CD8-positive, alpha-beta T cell (primary cell): ENCODE measurements at regions of chr12 and their contacts with region 1.

Region 1: DNA sequence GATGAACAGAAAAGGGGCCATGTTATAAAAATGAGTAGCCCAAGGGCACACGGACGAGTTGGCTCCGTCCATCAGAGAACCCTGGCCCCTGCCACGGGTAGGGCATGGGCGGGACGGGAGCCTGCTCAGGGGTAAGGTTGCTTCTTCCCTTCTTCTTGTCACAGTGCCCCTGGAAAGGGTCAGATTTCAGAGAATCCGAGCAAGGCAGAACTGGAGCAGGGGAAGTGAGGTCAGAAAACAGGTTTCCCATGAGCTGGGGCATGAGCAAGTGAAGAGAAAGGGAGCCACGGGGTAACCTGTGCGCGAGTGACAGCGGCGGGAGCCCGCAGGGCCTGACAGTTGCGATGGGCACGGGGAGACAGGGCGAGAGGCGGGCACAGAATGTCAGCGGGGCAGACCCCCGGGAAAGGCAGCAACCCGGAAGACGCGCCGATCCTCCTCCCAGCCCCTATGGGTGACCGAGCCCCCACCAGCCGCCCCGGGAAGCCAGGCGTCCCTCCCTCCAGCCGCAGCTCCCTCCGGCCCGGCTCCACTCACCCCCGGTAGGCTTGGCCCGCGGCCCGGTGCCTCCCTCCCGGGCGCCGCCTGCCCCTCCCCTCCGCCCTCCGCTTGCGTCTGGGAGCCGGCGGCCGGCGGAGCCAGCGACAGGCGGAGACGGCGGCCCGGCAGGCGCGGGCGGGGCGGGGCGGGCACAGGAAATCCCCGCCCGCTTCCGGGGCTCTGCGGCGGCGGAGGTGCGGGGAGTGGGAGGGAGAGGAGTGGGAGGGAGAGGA is at the start of gene ZNF641:
- DNase-seq: peak; percentile 54 to 93 (median 81)
- ATAC-seq: peak; percentile 87
- H3K4me3 ChIP-seq: peak within 1 kb of the TSS; percentile 86 to 88
- H3K4me3 Mint-ChIP-seq: peak within 1 kb of the TSS; percentile 92
- H3K27ac ChIP-seq: peak within 1 kb of the TSS; percentile 71 to 88
- H3K27ac Mint-ChIP-seq: peak within 1 kb of the TSS; percentile 95
- H3K4me1 ChIP-seq: peaks cover 26% of the 10 kb centered on the region
- H3K4me1 Mint-ChIP-seq: peaks cover 44% of the 10 kb centered on the region
- H3K27me3 ChIP-seq: no peaks in the 10 kb centered on the region
- H3K27me3 Mint-ChIP-seq: no peaks in the 10 kb centered on the region
- CTCF ChIP-seq: no peak
- total RNA-seq, gene ZNF641: 12.1 to 12.3 TPM

Region 2: DNA sequence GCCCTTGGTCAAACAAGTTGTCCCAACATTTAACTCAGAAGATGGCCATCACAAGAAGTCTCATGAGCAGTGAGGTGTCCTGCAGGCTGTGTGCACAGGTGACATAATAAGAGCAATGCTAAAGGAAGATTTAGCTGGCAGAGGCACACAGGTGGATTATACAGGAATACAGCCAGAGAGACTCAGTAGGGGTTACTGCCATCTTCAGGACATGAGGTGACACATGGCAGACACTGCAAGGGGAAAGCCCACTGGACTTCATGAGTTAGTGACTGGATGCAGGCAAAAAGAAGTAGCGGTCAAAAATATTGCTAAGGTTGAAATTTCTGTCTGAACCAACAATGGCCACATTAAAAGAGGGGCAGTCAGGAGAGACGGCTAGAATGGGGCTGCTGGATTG is 692.9 kb before region 1 on chr12:
- CTCF ChIA-PET with region 1: no interaction called
- POLR2A ChIA-PET with region 1: no interaction called
- intact Hi-C with region 1: loop called in 1 of 2 experiments (anchors 5 kb)
- DNase-seq: no peak
- ATAC-seq: no peak
- H3K4me3 ChIP-seq: no peak overlapping the region
- H3K4me3 Mint-ChIP-seq: no peak overlapping the region
- H3K27ac ChIP-seq: no peak overlapping the region
- H3K27ac Mint-ChIP-seq: no peak overlapping the region
- H3K4me1 ChIP-seq: no peaks in the 10 kb centered on the region
- H3K4me1 Mint-ChIP-seq: peaks cover under 1% of the 10 kb centered on the region
- H3K27me3 ChIP-seq: no peaks in the 10 kb centered on the region
- H3K27me3 Mint-ChIP-seq: no peaks in the 10 kb centered on the region
- CTCF ChIP-seq: no peak

Region 3: GRCh38 chr12:48183091-48183875 is 167.2 kb before region 1 on chr12 and contains the start of gene CCDC184:
- CTCF ChIA-PET with region 1: no interaction called
- POLR2A ChIA-PET with region 1: no interaction called
- intact Hi-C with region 1: loop called in 1 of 2 experiments (anchors 5 kb)
- DNase-seq: peak; percentile 48 to 93 (median 74)
- ATAC-seq: peak; percentile 80
- H3K4me3 ChIP-seq: peak within 1 kb of the TSS; percentile 75 to 99
- H3K4me3 Mint-ChIP-seq: peak within 1 kb of the TSS; percentile 93
- H3K27ac ChIP-seq: peak within 1 kb of the TSS; percentile 50 to 85
- H3K27ac Mint-ChIP-seq: peak within 1 kb of the TSS; percentile 43
- H3K4me1 ChIP-seq: peaks cover 14% of the 10 kb centered on the region
- H3K4me1 Mint-ChIP-seq: peaks cover 6% of the 10 kb centered on the region
- H3K27me3 ChIP-seq: peaks cover 6 to 12% of the 10 kb centered on the region in 2 experiments
- H3K27me3 Mint-ChIP-seq: peaks cover 29% of the 10 kb centered on the region
- CTCF ChIP-seq: peak; percentile 54
- total RNA-seq, gene CCDC184: 0.90 to 1.3 TPM

Region 4: DNA sequence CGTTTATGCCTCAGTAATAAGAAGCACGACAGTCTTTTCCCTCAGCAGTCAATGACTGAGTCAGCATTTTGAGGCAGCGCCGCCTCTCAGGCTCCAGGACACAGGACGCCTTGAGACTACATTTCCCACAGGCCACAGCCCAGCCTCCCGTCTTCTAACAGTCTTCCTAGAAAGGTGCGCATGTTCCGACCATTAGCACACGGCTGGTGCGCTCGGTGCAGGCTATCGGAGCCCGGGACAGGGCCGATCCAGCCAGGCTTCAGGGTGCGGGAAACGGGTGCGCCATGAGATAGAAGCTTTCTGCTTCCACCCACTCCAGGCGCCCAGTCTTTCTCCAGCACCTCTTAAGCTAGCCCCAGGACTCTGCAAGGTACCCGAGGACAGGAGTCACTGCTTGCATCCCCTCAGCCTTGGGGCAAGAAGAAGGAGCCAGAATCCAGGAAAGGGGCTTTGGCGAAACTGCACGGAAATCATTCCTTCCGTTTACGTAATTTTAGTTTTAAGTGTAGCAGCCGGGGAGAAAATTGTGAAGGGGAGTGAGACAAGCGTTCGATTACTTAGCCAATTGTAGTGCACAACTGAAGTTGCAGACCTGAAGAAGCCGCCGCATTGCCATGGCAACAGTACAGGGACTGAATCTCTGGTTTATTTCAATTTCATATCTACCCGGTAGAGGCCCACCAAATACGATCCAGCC is 53.7 kb before region 1 on chr12:
- CTCF ChIA-PET with region 1: no interaction called
- POLR2A ChIA-PET with region 1: no interaction called
- intact Hi-C with region 1: no loop called
- DNase-seq: peak in 8 of 9 experiments; percentile 2 to 65 (median 45)
- ATAC-seq: peak; percentile 83
- H3K4me3 ChIP-seq: peak overlapping the region; percentile 47 to 56
- H3K4me3 Mint-ChIP-seq: peak overlapping the region; percentile 83
- H3K27ac ChIP-seq: no peak overlapping the region
- H3K27ac Mint-ChIP-seq: no peak overlapping the region
- H3K4me1 ChIP-seq: peaks cover 3% of the 10 kb centered on the region
- H3K4me1 Mint-ChIP-seq: peaks cover 11% of the 10 kb centered on the region
- H3K27me3 ChIP-seq: no peaks in the 10 kb centered on the region
- H3K27me3 Mint-ChIP-seq: peaks cover 8% of the 10 kb centered on the region
- CTCF ChIP-seq: no peak